PC-3 (cell line): ENCODE measurements at regions of chr9 and their contacts with region 1.

Region 1: DNA sequence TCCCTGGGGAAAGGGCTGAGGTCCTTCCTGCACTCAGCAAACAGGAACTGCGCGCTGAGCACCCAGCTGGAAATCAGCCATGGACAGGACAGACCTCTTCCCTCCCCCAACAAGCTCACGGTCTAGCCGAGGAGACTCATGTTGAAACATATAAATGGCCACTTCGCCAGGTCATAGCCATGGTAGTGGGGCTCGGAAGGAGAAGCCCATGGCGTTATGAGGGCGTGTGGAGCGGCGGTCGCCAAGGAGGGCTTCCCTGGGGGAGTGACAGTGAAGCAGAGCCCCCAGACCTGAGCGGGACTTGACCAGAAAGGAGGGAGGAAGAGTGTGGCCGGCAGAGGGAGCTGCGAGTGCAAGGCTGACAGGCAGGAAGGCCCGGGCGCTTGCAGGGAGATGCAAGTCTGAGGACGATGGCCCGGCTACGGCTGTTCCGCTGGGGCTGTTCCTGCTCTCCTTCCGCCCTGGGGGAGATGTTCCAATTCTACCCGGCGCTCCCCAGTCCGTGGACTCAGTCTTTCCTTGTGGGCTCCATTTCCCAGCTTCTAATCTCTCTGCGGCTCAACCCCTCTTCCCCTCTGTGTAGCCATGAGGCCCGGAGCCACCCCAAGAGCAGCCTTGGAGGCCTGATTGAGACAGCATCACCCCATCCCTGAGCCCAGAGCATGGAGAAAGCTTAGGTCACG is 43.9 kb upstream of the PRRC2B start:
- DNase-seq: peak; percentile 74
- ATAC-seq: peak; percentile 98
- H3K4me3 ChIP-seq: peak overlapping the region; percentile 79
- H3K27ac ChIP-seq: no peak overlapping the region
- H3K4me1 ChIP-seq: peaks cover 5% of the 10 kb centered on the region; the same call in 1 of the 2 replicates
- H3K27me3 ChIP-seq: no peaks in the 10 kb centered on the region
- CTCF ChIP-seq: peak; percentile 77

Region 2: DNA sequence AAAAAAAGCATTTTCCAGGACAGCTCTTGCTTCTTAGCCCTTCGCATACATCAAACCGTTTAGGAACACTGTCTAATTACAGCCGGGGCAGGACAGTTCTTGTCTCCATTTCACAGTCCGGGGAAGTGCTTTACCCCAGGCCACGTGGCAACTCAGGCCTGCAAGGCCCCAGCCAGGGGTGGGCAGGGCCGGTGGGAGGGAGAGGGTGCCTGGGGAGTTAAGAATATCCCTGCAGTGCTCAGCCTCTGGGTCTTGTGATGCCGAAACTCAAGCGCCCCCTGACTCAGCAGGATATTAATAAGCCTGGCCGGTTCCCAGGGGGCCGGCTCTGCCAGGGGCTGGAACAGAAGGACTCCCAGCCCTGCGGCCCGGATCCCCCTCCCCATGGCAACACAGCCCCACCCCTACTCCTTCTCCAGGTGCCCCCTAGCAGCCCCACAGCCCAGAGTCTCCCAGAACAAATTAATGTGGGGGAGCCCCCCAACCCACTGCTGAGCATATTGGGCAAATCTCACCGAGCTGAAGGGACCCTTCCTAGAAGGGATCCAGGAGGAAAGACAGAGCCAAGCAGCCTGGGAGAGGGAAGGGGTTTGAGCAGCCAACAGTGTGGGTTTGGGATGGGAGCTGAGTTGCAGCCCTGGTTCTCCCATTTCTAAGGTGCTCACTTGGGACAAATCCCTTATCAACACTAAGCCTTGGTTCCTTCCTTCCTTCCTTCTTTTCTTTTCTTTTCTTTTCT is 15.2 kb before region 1 on chr9:
- CTCF ChIA-PET with region 1: no interaction called
- POLR2A ChIA-PET with region 1: no interaction called
- intact Hi-C with region 1: no loop called
- DNase-seq: no peak
- ATAC-seq: no peak
- H3K4me3 ChIP-seq: no peak overlapping the region
- H3K27ac ChIP-seq: no peak overlapping the region
- H3K4me1 ChIP-seq: no peaks in the 10 kb centered on the region
- H3K27me3 ChIP-seq: no peaks in the 10 kb centered on the region
- CTCF ChIP-seq: no peak

Region 3: GRCh38 chr9:131361202-131361833 is 11.3 kb after region 1 on chr9:
- CTCF ChIA-PET with region 1: no interaction called
- POLR2A ChIA-PET with region 1: no interaction called
- intact Hi-C with region 1: no loop called
- DNase-seq: no peak
- ATAC-seq: no peak
- H3K4me3 ChIP-seq: no peak overlapping the region
- H3K27ac ChIP-seq: no peak overlapping the region
- H3K4me1 ChIP-seq: no peaks in the 10 kb centered on the region
- H3K27me3 ChIP-seq: no peaks in the 10 kb centered on the region
- CTCF ChIP-seq: no peak

Region 4: GRCh38 chr9:131459056-131459455 is 109.0 kb after region 1 on chr9:
- CTCF ChIA-PET with region 1: interaction called, 3 read pairs
- POLR2A ChIA-PET with region 1: no interaction called
- intact Hi-C with region 1: loop called (anchors 10 kb)
- DNase-seq: no peak
- ATAC-seq: no peak
- H3K4me3 ChIP-seq: no peak overlapping the region
- H3K27ac ChIP-seq: no peak overlapping the region
- H3K4me1 ChIP-seq: no peaks in the 10 kb centered on the region
- H3K27me3 ChIP-seq: no peaks in the 10 kb centered on the region
- CTCF ChIP-seq: no peak